Dendritic cell treated with granulocyte-macrophage colony-stimulating factor and Interleukin-4, amounts not matched to agents 40 ng/mL and 50 ng/mL, for 4 days (primary cell): ENCODE measurements at regions of chr7 and their contacts with region 1.

Region 1: GRCh38 chr7:105522062-105522936 is at the start of gene PUS7:
- H3K4me3 Mint-ChIP-seq: peak within 1 kb of the TSS; percentile 91
- H3K27ac Mint-ChIP-seq: peak within 1 kb of the TSS; percentile 96
- H3K4me1 Mint-ChIP-seq: peaks cover 23% of the 10 kb centered on the region
- H3K27me3 Mint-ChIP-seq: peaks cover 2% of the 10 kb centered on the region

Region 2: DNA sequence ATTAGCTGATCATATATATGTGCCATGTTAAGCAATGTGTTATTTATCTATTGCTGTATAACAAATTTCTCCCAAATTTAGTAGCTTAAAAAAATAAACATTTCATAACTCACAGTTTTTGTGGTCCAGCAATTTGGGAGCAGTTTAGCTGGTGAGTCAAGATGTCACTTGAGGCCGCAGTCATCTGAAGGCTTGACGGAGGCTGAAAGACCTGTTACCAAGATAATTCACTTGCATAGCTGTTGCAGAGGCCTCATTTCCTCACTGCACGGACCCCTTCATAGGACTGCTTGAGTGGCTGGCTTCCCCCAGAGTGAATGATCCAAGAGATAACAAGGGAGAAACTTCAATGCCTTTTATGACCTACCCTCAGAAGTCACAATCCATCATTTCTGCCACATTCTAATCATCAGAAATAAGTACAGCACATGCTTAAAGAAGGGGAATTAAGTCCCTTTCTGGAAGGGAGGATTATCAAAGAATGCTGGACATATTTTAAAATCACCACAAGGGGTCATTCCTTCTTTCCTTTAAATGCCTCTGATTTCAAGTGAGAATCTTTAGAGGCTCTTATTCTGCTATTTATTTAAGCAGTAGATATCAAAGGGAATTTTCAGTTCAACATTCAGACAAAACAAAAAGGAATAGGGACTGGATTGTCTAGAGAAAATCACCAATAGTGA is 123.1 kb before region 1 on chr7:
- intact Hi-C with region 1: loop called (anchors 5 kb)
- H3K4me3 Mint-ChIP-seq: no peak overlapping the region
- H3K27ac Mint-ChIP-seq: no peak overlapping the region
- H3K4me1 Mint-ChIP-seq: peaks cover 18% of the 10 kb centered on the region
- H3K27me3 Mint-ChIP-seq: peaks cover 4% of the 10 kb centered on the region

Region 3: GRCh38 chr7:105866102-105866801 is 344.0 kb after region 1 on chr7:
- intact Hi-C with region 1: no loop called
- H3K4me3 Mint-ChIP-seq: no peak overlapping the region
- H3K27ac Mint-ChIP-seq: no peak overlapping the region
- H3K4me1 Mint-ChIP-seq: peaks cover 9% of the 10 kb centered on the region
- H3K27me3 Mint-ChIP-seq: no peaks in the 10 kb centered on the region

Region 4: DNA sequence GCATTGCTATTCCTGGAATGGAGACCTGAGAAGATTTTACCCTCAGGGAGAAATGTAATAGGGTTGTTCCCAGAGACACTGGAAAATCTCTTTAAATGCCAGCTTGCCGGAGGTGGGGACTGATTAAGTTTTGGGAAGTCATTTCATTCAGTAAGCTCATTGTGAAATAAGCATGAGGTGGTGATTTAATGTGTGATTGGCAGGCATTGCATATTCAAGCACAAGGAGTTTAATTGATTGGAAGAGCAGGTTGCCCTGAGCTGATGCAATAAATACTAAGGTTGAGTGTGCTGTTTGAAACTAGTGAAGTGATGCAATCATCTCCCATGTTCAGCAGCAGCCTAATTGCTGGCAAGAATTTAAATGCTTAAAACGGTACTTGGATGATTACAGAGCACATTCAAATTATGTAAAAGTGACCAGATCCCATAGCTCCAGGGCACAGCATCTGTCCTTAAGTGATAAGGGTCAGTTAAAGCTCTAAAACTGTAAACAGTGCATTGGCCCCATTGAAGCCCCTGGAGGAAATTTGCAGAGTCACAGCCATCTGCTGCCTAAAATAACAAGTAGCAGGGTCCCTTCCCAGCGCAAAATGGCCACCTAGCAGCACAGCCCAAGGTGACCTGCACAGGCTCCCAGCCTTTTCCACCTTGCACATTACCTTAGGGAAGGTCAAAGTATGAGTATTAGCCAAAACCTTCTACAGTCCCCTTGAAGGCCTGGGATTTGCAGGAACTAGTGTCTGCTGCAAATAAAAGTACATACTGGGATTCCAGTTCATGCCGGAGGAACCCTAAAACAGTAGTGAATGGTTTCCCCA is 1046.6 kb after region 1 on chr7:
- intact Hi-C with region 1: no loop called
- H3K4me3 Mint-ChIP-seq: no peak overlapping the region
- H3K27ac Mint-ChIP-seq: no peak overlapping the region
- H3K4me1 Mint-ChIP-seq: peaks cover 30% of the 10 kb centered on the region
- H3K27me3 Mint-ChIP-seq: peaks cover 8% of the 10 kb centered on the region